ENCODE measurements at regions of chr6 and their contacts with region 1.

Region 1: GRCh38 chr6:29649701-29650673 is 6.9 kb upstream of the MOG start:
- DNase-seq: peak; percentile 99
- ATAC-seq: peak; percentile 89
- H3K4me3 Mint-ChIP-seq: peak overlapping the region; percentile 85
- H3K27ac Mint-ChIP-seq: peak overlapping the region; percentile 99
- H3K4me1 Mint-ChIP-seq: peaks cover 36% of the 10 kb centered on the region
- H3K27me3 Mint-ChIP-seq: no peaks in the 10 kb centered on the region
- CTCF ChIP-seq: peak; percentile 73

Region 2: GRCh38 chr6:29632789-29633533 is 17.0 kb before region 1 on chr6 and contains the start of gene GABBR1:
- CTCF ChIA-PET with region 1: interaction called, 74 read pairs
- POLR2A ChIA-PET with region 1: interaction called, 16 read pairs
- DNase-seq: peak; percentile 90
- ATAC-seq: peak; percentile 51
- H3K4me3 Mint-ChIP-seq: peak within 1 kb of the TSS; percentile 87
- H3K27ac Mint-ChIP-seq: peak within 1 kb of the TSS; percentile 79
- H3K4me1 Mint-ChIP-seq: peaks cover 63% of the 10 kb centered on the region
- H3K27me3 Mint-ChIP-seq: no peaks in the 10 kb centered on the region
- CTCF ChIP-seq: no peak
- total RNA-seq, gene GABBR1: 82.5 to 107 TPM (median 83.0 TPM) in 3 replicates

Region 3: DNA sequence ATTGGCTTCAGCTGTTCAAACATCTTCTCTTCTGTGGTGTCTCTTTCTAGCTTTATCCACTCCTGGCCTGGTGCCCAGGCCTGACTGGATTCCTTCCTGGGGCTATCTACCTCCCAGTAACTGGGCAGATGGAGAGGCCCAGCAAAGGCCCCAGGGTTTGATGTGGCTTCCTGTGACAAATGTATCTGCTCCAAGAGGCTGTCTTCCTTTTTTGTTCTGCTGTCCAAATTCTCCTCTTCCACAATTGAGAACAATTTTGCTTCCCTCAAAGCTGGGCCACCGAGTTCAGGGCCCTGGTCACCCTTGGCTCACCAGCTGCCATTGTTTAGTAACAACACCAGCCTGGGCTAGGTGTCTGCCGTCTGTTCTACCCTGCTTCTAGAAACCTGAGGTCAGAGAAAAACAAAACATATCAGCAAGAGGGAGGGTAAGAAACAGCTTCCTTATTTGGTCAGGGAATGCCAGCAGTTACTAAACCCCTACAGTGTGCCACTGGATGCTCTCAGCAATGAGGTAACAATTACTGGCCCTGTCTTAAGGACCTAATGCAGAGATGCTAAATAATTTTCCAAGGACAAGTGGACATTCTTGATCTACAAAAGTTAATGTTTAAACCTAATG is 27.1 kb after region 1 on chr6:
- CTCF ChIA-PET with region 1: interaction called, 405 read pairs
- POLR2A ChIA-PET with region 1: interaction called, 8 read pairs
- DNase-seq: no peak
- ATAC-seq: peak; percentile 80
- H3K4me3 Mint-ChIP-seq: no peak overlapping the region
- H3K27ac Mint-ChIP-seq: peak overlapping the region; percentile 95
- H3K4me1 Mint-ChIP-seq: peaks cover 48% of the 10 kb centered on the region
- H3K27me3 Mint-ChIP-seq: peaks cover 15% of the 10 kb centered on the region
- CTCF ChIP-seq: no peak

Region 4: DNA sequence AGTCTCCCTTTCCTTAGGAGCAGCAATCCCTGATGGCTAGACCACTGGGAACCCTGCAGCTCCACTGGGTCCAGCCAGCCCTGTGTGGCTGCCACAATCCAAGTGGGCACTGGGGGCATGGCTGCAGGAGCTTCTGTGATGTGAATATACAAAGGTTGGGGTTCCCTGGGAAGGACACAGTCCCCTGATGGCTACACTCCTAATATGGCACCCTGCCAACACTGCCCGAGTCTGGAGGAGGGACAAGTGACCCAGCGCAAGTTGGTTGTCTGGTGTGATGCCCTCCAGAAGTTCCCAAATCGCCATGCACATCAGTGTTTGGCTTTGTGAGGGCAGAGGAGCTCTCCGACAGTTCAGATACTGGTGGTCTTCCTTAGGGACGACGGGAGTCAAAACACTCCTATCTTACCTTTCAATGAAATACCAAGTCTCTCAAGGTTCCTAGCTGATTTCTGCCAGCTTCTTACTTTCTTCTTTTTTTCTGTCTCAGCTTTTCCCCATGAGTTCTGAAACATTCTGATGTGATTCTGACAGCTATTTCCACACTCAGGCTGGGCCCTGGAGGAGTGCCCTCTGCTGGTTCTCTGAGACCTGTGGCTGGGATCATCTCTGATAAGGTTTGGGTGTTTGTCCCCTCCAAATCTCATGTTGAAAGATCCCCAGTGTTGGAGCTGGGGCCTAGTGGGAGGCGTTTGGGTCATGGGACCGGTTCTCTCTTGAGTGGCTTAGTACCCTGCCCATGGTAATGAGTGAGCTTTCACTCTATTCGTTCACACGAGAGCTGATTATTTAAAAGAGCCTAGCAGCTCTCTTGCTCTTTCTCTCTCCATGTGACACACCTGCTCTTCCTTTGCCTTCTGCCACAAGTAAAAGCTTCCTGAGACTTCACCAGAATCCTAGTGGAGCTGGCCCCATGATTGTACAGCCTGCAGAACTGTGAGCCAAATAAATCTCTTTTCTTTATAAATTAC is 46.5 kb after region 1 on chr6:
- CTCF ChIA-PET with region 1: interaction called, 531 read pairs
- POLR2A ChIA-PET with region 1: interaction called, 8 read pairs
- DNase-seq: peak; percentile 57
- ATAC-seq: peak; percentile 86
- H3K4me3 Mint-ChIP-seq: no peak overlapping the region
- H3K27ac Mint-ChIP-seq: no peak overlapping the region
- H3K4me1 Mint-ChIP-seq: peaks cover 15% of the 10 kb centered on the region
- H3K27me3 Mint-ChIP-seq: no peaks in the 10 kb centered on the region; the same call in none of the 2 replicates
- CTCF ChIP-seq: no peak

Region 5: GRCh38 chr6:29752451-29753308 is 102.7 kb after region 1 on chr6:
- CTCF ChIA-PET with region 1: interaction called, 21 read pairs
- POLR2A ChIA-PET with region 1: interaction called, 6 read pairs
- DNase-seq: peak; percentile 92
- ATAC-seq: peak; percentile 66
- H3K4me3 Mint-ChIP-seq: peak overlapping the region; percentile 85
- H3K27ac Mint-ChIP-seq: peak overlapping the region; percentile 27; the same call in 1 of the 2 replicates
- H3K4me1 Mint-ChIP-seq: peaks cover 58% of the 10 kb centered on the region
- H3K27me3 Mint-ChIP-seq: peaks cover 54% of the 10 kb centered on the region
- CTCF ChIP-seq: peak; percentile 76

Region 6: GRCh38 chr6:29834564-29835436 is 184.8 kb after region 1 on chr6:
- CTCF ChIA-PET with region 1: interaction called, 17 read pairs
- POLR2A ChIA-PET with region 1: no interaction called
- DNase-seq: peak; percentile 82
- ATAC-seq: peak; percentile 90
- H3K4me3 Mint-ChIP-seq: no peak overlapping the region
- H3K27ac Mint-ChIP-seq: no peak overlapping the region
- H3K4me1 Mint-ChIP-seq: no peaks in the 10 kb centered on the region; the same call in 1 of the 2 replicates
- H3K27me3 Mint-ChIP-seq: peaks cover 57% of the 10 kb centered on the region
- CTCF ChIP-seq: peak; percentile 98